ENCODE measurements at regions of chr2 and their contacts with region 1.

Region 1: GRCh38 chr2:236642584-236643291 is 73.1 kb downstream of the ACKR3 start:
- DNase-seq: peak; percentile 98 to 99
- H3K4me3 ChIP-seq: peak overlapping the region; percentile 24 to 34
- H3K27ac ChIP-seq: peak overlapping the region; percentile 80 to 84
- H3K4me1 ChIP-seq: peaks cover 0 to 52% (median 23%) of the 10 kb centered on the region in 4 donors
- H3K27me3 ChIP-seq: no peaks in the 10 kb centered on the region
- CTCF ChIP-seq: peak in 1 of 2 experiments; percentile 4

Region 2: DNA sequence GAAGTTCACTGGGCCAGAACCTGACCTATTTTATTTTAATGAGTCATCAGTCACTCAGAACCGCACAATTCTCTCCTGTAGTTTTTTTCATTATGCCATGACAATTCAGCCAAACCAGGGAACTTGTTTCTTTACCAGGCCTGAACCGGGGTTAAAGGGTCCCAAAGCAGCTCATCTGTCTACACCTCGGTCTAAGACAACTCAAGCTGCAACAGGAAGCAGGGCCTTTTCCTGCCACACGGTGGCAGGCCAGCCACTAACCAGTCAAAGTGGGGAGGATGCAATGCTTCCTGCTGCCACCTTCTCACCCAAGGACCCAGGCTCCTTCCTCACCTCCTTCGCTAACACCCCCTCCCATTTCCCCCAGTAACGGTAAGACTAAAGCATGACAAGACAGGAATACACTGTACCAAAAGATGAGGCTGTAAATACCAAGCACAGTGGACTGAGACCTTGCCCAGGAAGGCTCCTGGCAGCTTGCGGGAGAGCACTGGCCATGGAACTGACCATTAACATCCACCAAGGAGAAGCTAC is 129.8 kb before region 1 on chr2:
- intact Hi-C with region 1: loop called (anchors 5 kb)
- DNase-seq: peak; percentile 66 to 82
- H3K4me3 ChIP-seq: no peak overlapping the region
- H3K27ac ChIP-seq: peak overlapping the region in 1 of 2 donors; percentile 23
- H3K4me1 ChIP-seq: peaks cover 0 to 10% (median 6%) of the 10 kb centered on the region in 4 donors
- H3K27me3 ChIP-seq: no peaks in the 10 kb centered on the region
- CTCF ChIP-seq: peak; percentile 86